Pancreas (tissue), 10 donors: ENCODE measurements at regions of chr11 and their contacts with region 1.

Region 1: DNA sequence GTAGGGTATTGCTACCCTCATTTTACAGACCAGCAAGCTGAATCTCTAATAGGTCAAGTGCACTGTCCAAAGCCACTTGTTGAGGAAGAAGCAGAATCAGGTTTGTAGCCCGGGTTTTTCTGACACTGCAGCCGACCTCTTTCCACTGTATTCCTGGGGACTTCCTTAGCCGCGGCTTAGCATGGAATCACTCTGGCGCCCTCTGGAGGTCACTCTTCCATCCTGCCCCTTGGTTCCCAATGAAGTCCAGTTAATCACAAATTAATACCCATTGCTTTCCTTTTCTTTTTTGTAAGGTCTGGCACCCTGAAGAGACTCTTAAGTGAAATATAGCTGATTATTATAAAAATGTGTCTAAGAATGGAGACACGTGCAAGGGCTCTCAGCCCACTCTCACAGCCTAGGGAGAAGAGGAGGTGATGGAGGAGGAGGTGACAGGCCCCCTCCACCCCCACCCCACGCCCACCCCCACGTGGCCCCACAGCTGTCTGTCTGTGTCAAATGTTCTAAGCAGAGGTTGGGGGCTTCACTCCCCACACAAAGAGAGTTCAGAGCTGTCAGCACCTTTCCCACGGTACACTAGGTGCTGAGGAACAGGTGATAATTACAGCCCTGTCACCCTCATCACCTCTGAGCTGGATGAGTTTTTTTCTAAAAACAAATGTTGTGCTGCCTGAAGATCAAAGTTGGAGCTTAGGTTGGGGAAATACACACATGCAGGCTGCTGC is 57.7 kb upstream of the DRD2 start:
- DNase-seq: peak; percentile 37 to 90 (median 74)
- ATAC-seq: peak; percentile 56 to 97 (median 92)
- H3K4me3 ChIP-seq: no peak overlapping the region
- H3K27ac ChIP-seq: no peak overlapping the region
- H3K4me1 ChIP-seq: no peaks in the 10 kb centered on the region
- H3K27me3 ChIP-seq: no peaks in the 10 kb centered on the region
- CTCF ChIP-seq: peak; percentile 78 to 89 (median 82)

Region 2: DNA sequence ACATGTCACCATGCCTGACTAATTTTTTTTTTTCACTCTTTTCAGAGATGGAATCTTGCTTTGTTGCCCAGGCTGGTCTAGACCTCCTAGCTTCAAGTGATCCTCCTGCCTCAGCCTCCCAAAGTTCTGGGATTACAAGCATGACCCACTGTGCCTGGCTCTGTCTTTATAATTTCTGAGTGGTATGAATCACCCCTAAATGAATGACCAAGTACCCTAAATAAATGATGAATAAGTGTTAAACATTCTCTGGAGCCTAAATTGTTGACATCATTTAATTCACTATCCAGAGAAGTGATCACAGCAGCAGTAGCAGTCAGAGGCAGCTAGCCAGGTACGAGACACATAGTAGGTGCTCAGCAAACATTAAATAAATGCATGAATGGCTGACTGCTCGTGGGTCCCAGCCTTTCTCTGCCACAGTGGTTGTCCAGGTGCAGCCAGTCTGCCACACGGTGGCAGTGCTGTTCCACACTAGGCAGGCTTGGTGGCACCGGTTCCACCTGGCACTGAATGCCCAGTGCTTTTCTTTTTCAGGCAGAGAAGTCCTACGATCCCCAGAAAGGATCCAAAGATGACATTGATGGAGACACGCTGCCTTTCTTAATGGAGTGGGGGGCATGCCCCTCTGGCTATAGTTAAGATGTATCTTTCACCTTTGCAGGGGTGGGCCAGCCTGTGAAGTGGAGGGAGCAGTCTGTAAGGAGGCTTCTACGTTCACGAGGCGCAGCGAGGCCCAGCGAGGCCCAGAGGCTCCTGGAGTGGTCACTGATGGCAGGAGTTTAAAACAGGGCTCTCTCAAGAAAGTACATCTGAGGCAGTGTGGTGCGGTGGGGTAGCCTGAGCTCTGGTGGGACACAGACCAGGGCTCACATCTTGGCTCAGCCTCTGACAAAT is 227.2 kb before region 1 on chr11:
- intact Hi-C with region 1: loop called in 2 of 3 experiments (anchors 5 kb)
- DNase-seq: peak; percentile 56 to 90 (median 80)
- ATAC-seq: peak; percentile 92 to 100 (median 98)
- H3K4me3 ChIP-seq: no peak overlapping the region
- H3K27ac ChIP-seq: no peak overlapping the region
- H3K4me1 ChIP-seq: no peaks in the 10 kb centered on the region
- H3K27me3 ChIP-seq: no peaks in the 10 kb centered on the region
- CTCF ChIP-seq: peak; percentile 77 to 94 (median 87)

Region 3: GRCh38 chr11:113314389-113315301 is 218.2 kb before region 1 on chr11 and contains the start of gene TTC12:
- intact Hi-C with region 1: loop called in 2 of 3 experiments (anchors 5 kb)
- DNase-seq: peak; percentile 93 to 98 (median 96)
- ATAC-seq: peak; percentile 99 to 100 (median 100)
- H3K4me3 ChIP-seq: peak within 1 kb of the TSS; percentile 68 to 92 (median 78)
- H3K27ac ChIP-seq: peak within 1 kb of the TSS; percentile 73 to 81 (median 77)
- H3K4me1 ChIP-seq: peaks cover 0 to 7% (median 0%) of the 10 kb centered on the region in 3 donors
- H3K27me3 ChIP-seq: no peaks in the 10 kb centered on the region
- CTCF ChIP-seq: no peak
- total RNA-seq, gene TTC12: 6.6 to 13.9 (median 8.4) TPM

Region 4: DNA sequence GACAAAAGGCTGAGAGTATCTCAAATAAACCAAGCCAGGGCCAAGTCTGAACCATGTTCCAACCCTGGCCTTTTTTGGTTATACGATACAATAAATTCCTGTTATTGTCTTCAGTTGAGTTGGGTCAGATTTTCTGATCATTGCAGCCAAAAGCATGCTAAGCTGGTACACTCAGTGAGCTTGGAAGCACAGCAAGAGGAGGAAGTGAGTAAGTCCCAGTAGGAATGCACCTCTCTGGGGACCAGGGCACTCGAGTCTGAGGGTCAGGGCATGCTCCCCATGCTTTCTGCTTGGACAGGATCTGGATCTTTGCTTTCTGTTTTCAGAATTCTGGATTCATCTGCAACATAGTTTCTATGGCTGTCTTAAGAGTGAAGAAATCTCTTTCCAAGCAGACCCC is 100.1 kb after region 1 on chr11:
- intact Hi-C with region 1: no loop called
- DNase-seq: no peak
- ATAC-seq: no peak
- H3K4me3 ChIP-seq: no peak overlapping the region
- H3K27ac ChIP-seq: no peak overlapping the region
- H3K4me1 ChIP-seq: peaks cover 0 to 3% (median 0%) of the 10 kb centered on the region in 3 donors
- H3K27me3 ChIP-seq: no peaks in the 10 kb centered on the region
- CTCF ChIP-seq: no peak

Region 5: GRCh38 chr11:113675003-113675561 is 142.2 kb after region 1 on chr11:
- intact Hi-C with region 1: no loop called
- DNase-seq: no peak
- ATAC-seq: peak in 2 of 4 donors; percentile 45
- H3K4me3 ChIP-seq: no peak overlapping the region
- H3K27ac ChIP-seq: no peak overlapping the region
- H3K4me1 ChIP-seq: no peaks in the 10 kb centered on the region
- H3K27me3 ChIP-seq: no peaks in the 10 kb centered on the region
- CTCF ChIP-seq: no peak